ENCODE measurements at regions of chr20 and their contacts with region 1.

Region 1: GRCh38 chr20:1313236-1313964 is 15.5 kb downstream of the SDCBP2 start:
- DNase-seq: peak; percentile 71
- ATAC-seq: peak; percentile 95
- H3K4me3 ChIP-seq: peak overlapping the region; percentile 13; the same call in 1 of the 2 replicates
- H3K27ac ChIP-seq: peak overlapping the region; percentile 20; the same call in 1 of the 2 replicates
- H3K4me1 ChIP-seq: no peaks in the 10 kb centered on the region
- H3K27me3 ChIP-seq: no peaks in the 10 kb centered on the region
- CTCF ChIP-seq: peak; percentile 95
- POLR2A ChIP-seq: no peak
- RAD21 ChIP-seq: peak; percentile 93

Region 2: GRCh38 chr20:1503564-1504227 is 190.3 kb after region 1 on chr20:
- CTCF ChIA-PET with region 1: interaction called, 5 read pairs
- POLR2A ChIA-PET with region 1: no interaction called
- dilution Hi-C with region 1: no loop called
- in situ Hi-C with region 1: no loop called
- intact Hi-C with region 1: loop called (anchors 1 kb)
- DNase-seq: peak; percentile 92
- ATAC-seq: peak; percentile 100
- H3K4me3 ChIP-seq: no peak overlapping the region
- H3K27ac ChIP-seq: no peak overlapping the region
- H3K4me1 ChIP-seq: no peaks in the 10 kb centered on the region
- H3K27me3 ChIP-seq: peaks cover 10% of the 10 kb centered on the region
- CTCF ChIP-seq: peak; percentile 100
- POLR2A ChIP-seq: 0 out of 2 replicates have a peak, but pooled peaks have one; percentile 27
- RAD21 ChIP-seq: peak; percentile 98

Region 3: GRCh38 chr20:1776681-1777475 is 463.5 kb after region 1 on chr20:
- CTCF ChIA-PET with region 1: no interaction called
- POLR2A ChIA-PET with region 1: no interaction called
- dilution Hi-C with region 1: no loop called
- in situ Hi-C with region 1: no loop called
- intact Hi-C with region 1: loop called (anchors 5 kb)
- DNase-seq: peak; percentile 87
- ATAC-seq: peak; percentile 97
- H3K4me3 ChIP-seq: peak overlapping the region; percentile 84
- H3K27ac ChIP-seq: peak overlapping the region; percentile 73
- H3K4me1 ChIP-seq: peaks cover 4% of the 10 kb centered on the region
- H3K27me3 ChIP-seq: peaks cover 14% of the 10 kb centered on the region
- CTCF ChIP-seq: peak; percentile 84
- POLR2A ChIP-seq: peak; percentile 65; the same call in 1 of the 2 replicates
- RAD21 ChIP-seq: peak; percentile 70